Activated CD4-positive, alpha-beta memory T cell treated with anti-CD3 and anti-CD28 coated beads for 36 hours (primary cell): ENCODE measurements at regions of chr12 and their contacts with region 1.

Region 1: DNA sequence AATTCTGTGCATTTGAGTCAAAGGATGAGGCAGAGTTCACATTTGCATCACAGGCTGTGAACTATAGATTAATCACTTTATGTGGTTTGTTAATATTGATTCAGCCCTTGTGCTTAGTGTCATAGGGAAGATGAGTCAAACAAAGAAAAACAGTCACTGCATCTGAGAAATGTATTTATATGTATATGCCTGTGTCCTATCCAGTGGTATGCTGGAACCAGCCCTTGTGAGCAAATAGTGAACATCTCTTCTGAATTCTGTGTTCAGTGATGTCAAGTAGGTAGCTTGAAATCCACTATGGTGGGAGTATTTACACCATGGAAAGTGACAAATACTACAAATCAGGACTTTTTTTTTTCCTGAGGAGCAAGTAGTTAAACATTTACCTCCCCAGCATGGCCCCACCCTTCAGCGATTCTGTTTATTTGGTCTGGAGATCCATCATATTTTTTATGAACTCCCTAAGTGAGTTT is 128.5 kb downstream of the HMGA2 start:
- DNase-seq: no peak
- H3K4me3 Mint-ChIP-seq: no peak overlapping the region
- H3K27ac Mint-ChIP-seq: no peak overlapping the region
- H3K4me1 Mint-ChIP-seq: peaks cover 5% of the 10 kb centered on the region
- H3K27me3 Mint-ChIP-seq: peaks cover 9% of the 10 kb centered on the region

Region 2: GRCh38 chr12:65656904-65657351 is 295.8 kb before region 1 on chr12:
- CTCF ChIA-PET with region 1: no interaction called
- POLR2A ChIA-PET with region 1: no interaction called
- intact Hi-C with region 1: loop called (anchors 2 kb)
- DNase-seq: peak; percentile 15
- H3K4me3 Mint-ChIP-seq: no peak overlapping the region
- H3K27ac Mint-ChIP-seq: no peak overlapping the region
- H3K4me1 Mint-ChIP-seq: peaks cover 7% of the 10 kb centered on the region
- H3K27me3 Mint-ChIP-seq: peaks cover 26% of the 10 kb centered on the region

Region 3: DNA sequence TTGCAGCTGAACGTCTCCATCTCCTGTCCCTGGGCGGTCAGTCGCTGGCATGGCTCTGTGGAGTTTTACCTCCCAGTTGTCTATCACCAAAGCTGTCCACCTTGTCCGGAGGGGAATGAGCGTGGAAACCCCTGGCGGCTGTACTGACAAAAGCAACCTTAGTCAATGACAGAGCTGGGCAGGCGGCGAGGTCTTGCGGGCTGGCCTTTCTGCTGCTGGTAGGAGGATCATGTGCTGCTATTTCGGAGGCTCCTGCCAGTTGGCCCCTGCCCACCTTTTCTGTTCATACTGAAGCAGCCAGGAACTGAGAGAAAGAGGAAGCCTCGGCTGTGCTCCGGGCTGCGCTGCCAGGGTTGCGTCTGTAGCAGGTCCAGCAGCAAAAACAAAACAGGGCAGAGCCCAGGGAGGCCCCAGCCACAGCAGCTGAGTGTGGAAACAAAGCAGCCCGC is 70.8 kb before region 1 on chr12:
- CTCF ChIA-PET with region 1: no interaction called
- POLR2A ChIA-PET with region 1: no interaction called
- intact Hi-C with region 1: no loop called
- DNase-seq: no peak
- H3K4me3 Mint-ChIP-seq: no peak overlapping the region
- H3K27ac Mint-ChIP-seq: no peak overlapping the region
- H3K4me1 Mint-ChIP-seq: peaks cover 4% of the 10 kb centered on the region
- H3K27me3 Mint-ChIP-seq: peaks cover 35% of the 10 kb centered on the region